ENCODE measurements at regions of chr17 and their contacts with region 1.

Region 1: DNA sequence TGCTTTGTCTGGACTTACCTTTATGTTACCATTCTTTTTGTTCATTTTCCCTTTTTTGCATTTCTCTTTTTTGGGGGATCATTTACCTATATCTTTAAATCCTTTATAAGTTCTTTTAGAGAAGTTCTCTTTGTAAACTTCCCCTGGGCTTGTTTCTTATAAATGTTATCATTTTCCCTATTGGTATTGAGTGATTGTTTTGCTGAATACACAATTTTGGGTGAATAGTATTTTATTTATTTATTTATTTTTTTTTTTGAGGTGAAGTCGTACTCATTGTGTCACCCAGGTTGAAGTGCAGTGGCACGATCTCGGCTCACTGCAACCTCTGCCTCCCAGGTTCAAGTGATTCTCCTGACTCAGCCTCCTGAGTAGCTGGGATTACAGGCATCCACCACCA is 18.4 kb downstream of the TBX21 start:
- DNase-seq: no peak
- ATAC-seq: no peak
- H3K4me3 ChIP-seq: no peak overlapping the region
- H3K27ac ChIP-seq: no peak overlapping the region
- H3K4me1 ChIP-seq: no peaks in the 10 kb centered on the region
- H3K27me3 ChIP-seq: peaks cover 34% of the 10 kb centered on the region
- CTCF ChIP-seq: no peak

Region 2: DNA sequence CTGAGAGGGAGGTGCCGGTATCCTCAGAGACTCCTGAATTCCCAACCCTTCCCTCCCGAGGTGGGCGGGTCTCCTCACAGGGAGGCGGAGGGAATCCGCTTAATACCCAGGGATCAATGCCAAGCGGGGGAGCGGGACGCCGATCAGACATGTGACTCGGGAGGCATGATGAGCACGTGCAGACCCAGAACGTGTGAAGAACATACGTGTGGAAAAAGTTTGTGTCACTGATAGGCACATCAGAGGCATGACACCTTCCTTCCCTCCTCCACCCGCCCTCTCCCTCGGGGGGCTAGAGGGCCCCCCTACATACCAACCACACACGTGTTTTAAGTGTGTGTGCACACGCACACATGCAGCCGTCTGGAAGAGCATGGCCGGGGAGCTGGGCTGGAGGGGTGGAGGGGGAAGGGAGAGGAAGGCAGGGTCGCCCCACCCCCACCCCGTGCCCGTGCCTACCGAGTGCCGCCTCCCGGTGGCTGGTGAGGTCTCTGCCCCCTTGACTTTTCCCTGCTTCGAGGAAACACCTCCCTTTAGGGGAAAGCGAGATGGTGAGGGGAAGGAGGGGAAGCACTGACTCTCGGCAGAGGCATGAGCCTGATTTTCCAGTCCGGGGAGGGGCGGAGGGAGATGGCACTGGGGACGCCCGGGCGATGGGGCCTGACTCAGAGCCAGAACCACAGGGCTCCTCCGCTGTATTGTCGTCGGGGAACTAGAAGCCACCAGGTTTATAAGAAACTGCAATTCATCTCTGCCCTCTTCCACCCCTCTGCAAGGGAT is 30.5 kb before region 1 on chr17:
- CTCF ChIA-PET with region 1: no interaction called
- POLR2A ChIA-PET with region 1: interaction called, 17 read pairs
- intact Hi-C with region 1: no loop called
- DNase-seq: peak; percentile 88
- ATAC-seq: peak; percentile 44
- H3K4me3 ChIP-seq: peak overlapping the region; percentile 4; the same call in 1 of the 2 replicates
- H3K27ac ChIP-seq: no peak overlapping the region
- H3K4me1 ChIP-seq: peaks cover 42% of the 10 kb centered on the region
- H3K27me3 ChIP-seq: no peaks in the 10 kb centered on the region
- CTCF ChIP-seq: peak; percentile 23; the same call in 1 of the 2 replicates

Region 3: GRCh38 chr17:47821424-47822391 is 70.2 kb after region 1 on chr17 and contains the start of gene OSBPL7:
- CTCF ChIA-PET with region 1: no interaction called
- POLR2A ChIA-PET with region 1: no interaction called
- intact Hi-C with region 1: no loop called
- DNase-seq: peak; percentile 94
- ATAC-seq: peak; percentile 91
- H3K4me3 ChIP-seq: peak within 1 kb of the TSS; percentile 74
- H3K27ac ChIP-seq: peak within 1 kb of the TSS; percentile 52
- H3K4me1 ChIP-seq: peaks cover 25% of the 10 kb centered on the region
- H3K27me3 ChIP-seq: no peaks in the 10 kb centered on the region
- CTCF ChIP-seq: peak; percentile 71
- total RNA-seq, gene OSBPL7: 18.4 and 22.1 TPM in 2 replicates

Measured in PC-3 (cell line).